MCF 10A (cell line): ENCODE measurements at regions of chr4 and their contacts with region 1.

Region 1: DNA sequence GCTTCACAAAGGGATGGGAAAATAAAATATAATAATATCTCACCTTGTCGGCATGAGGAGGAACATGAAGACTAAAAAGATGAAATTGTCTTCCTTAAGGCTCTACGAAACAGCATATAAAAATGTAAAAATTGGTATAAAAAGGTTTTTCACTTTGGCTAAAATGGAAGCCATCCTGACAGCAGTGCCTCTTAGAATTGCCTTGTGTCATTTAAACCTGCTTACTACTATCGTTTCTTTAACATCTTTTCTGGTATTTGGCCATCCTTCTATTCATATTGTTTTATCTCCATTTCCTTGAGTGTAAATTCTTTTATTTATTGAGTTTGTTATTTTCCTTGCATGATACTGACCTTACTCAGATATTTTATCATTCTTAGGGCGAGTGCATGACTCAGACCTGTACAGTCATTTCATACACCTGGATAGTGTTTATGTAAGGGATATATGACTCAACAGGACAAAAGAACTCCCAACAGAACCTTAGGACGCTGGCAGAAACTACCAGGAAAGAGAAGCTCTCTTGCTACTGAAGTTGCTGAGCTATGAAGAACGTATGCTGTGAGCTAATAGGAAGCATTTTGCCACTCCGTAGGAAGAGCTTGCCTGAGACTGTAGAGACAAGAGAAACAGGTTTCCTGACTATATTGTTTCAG is 5.8 kb upstream of the CDKN2AIP start:
- DNase-seq: peak; percentile 96
- H3K4me3 Mint-ChIP-seq: peak overlapping the region; percentile 67
- H3K27ac Mint-ChIP-seq: peak overlapping the region; percentile 87
- H3K4me1 Mint-ChIP-seq: peaks cover 9% of the 10 kb centered on the region
- H3K27me3 Mint-ChIP-seq: no peaks in the 10 kb centered on the region
- CTCF ChIP-seq: no peak

Region 2: DNA sequence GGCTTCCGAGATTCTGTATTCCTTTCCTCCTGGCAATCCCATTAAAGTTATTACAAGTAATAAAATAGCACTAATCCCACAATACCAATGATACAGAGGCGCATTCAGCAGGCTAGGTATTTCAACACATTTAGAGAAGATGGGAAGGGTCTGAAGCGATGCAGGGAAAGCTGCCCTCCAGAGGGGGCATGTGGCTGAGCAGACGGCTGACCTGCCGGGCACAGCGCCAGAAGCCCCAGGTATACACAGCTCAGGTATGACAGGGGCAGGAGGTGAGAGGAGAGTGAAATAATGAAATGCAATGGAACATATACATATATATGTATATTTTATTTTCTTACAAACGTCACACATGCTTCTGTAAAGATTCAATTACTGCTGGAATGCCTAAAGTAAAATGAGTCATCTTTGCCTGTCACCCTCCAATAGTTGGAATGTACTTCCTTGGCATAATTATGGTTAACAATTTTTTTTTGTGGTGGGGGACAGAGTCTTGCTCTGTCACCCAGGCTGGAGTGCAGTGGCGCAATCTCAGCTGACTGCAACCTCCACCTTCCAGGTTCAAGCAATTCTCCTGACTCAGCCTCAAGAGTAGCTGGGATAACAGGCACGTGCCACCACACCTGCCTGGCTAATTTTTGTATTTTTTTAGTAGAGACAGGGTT is 15.5 kb before region 1 on chr4:
- CTCF ChIA-PET with region 1: interaction called, 7 read pairs
- POLR2A ChIA-PET with region 1: interaction called, 19 read pairs
- intact Hi-C with region 1: no loop called
- DNase-seq: peak; percentile 66
- H3K4me3 Mint-ChIP-seq: no peak overlapping the region
- H3K27ac Mint-ChIP-seq: peak overlapping the region; percentile 74
- H3K4me1 Mint-ChIP-seq: peaks cover 17% of the 10 kb centered on the region
- H3K27me3 Mint-ChIP-seq: no peaks in the 10 kb centered on the region
- CTCF ChIP-seq: no peak

Region 3: DNA sequence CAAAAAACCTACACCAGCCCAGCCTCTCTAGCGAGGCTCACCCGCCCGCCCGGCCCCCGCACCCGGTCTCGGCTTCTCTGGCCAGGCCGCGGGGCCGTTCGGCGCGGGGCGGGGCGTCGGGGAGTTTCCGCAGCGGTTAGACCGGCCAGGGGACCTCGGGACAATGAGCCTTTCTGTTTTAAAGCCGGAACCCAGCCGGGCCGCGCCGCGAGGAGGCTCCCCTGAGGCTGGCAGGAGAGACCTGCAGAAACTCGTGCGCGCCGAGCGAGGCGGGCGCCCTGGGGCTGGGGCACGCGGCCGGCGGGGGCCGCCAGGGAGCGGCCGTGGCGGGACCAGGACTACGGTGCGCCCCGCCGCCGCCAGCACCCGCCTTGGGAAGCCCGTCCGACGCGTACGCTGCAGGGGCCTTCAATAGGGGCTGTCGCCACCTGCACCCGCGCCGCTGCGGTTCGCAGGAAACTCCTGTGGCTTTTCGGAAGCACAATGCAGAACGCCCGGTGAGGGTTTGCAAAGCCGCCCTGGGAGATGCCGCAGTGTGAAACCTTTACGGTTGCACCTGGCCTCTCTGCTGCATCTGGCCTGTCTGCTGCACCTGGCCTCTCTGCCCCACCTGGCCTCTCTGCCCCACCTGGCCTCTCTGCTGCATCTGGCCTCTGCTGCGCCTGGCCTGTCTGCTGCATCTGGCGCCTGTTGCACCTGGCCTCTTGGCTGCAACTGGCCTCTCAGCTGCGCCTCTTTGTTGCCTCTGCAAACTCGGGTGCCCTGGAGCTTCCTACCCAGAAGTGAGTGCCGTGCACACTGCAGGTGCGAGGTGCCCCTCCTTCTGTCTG is 284.4 kb after region 1 on chr4:
- CTCF ChIA-PET with region 1: no interaction called
- POLR2A ChIA-PET with region 1: no interaction called
- intact Hi-C with region 1: no loop called
- DNase-seq: peak; percentile 25
- H3K4me3 Mint-ChIP-seq: peak overlapping the region; percentile 67
- H3K27ac Mint-ChIP-seq: no peak overlapping the region
- H3K4me1 Mint-ChIP-seq: no peaks in the 10 kb centered on the region
- H3K27me3 Mint-ChIP-seq: no peaks in the 10 kb centered on the region
- CTCF ChIP-seq: no peak